ENCODE measurements at regions of chr7 and their contacts with region 1.

Region 1: GRCh38 chr7:96709381-96710228 is at the start of gene SEM1:
- DNase-seq: peak; percentile 19 to 77 (median 41)
- ATAC-seq: peak; percentile 88 to 95 (median 91)
- H3K4me3 ChIP-seq: peak within 1 kb of the TSS; percentile 88 to 94
- H3K4me3 Mint-ChIP-seq: peak within 1 kb of the TSS; percentile 98 to 99 (median 98)
- H3K27ac ChIP-seq: peak within 1 kb of the TSS; percentile 85
- H3K27ac Mint-ChIP-seq: peak within 1 kb of the TSS; percentile 95 to 97
- H3K4me1 ChIP-seq: peaks cover 10% of the 10 kb centered on the region in 2 experiments
- H3K4me1 Mint-ChIP-seq: peaks cover 36 to 46% (median 44%) of the 10 kb centered on the region in 3 donors
- H3K27me3 ChIP-seq: no peaks in the 10 kb centered on the region
- H3K27me3 Mint-ChIP-seq: peaks cover 0 to 3% of the 10 kb centered on the region in 2 donors
- total RNA-seq, gene SEM1: 17.8 to 34.8 (median 30.2) TPM

Region 2: DNA sequence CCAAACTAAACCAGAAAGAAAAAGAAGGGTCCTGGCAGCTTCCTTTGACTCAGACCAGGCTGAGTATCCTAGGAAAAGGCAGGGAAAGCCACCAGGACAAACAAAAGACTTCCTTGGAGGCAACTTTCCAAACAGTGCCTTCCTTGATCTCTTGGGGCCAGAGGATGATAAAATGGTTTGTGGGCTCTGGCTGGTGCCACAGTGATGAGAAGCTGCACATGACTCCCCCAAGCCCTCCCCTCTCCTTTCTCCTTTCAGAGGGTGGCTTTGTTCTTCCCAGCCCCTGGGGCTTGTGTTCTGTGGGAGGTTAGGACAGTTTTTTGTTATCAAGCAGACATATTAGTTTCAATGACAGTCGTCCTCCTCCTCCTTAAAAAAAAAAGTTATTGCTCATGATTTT is 183.1 kb before region 1 on chr7:
- CTCF ChIA-PET with region 1: interaction called in 1 of 2 experiments, 13 read pairs
- POLR2A ChIA-PET with region 1: no interaction called
- DNase-seq: no peak
- ATAC-seq: no peak
- H3K4me3 ChIP-seq: no peak overlapping the region
- H3K4me3 Mint-ChIP-seq: no peak overlapping the region
- H3K27ac ChIP-seq: no peak overlapping the region
- H3K27ac Mint-ChIP-seq: no peak overlapping the region
- H3K4me1 ChIP-seq: no peaks in the 10 kb centered on the region
- H3K4me1 Mint-ChIP-seq: peaks cover 0 to 5% (median 0%) of the 10 kb centered on the region in 3 donors
- H3K27me3 ChIP-seq: peaks cover 0 to 2% of the 10 kb centered on the region in 2 experiments
- H3K27me3 Mint-ChIP-seq: peaks cover 18 to 26% of the 10 kb centered on the region in 2 donors

Region 3: DNA sequence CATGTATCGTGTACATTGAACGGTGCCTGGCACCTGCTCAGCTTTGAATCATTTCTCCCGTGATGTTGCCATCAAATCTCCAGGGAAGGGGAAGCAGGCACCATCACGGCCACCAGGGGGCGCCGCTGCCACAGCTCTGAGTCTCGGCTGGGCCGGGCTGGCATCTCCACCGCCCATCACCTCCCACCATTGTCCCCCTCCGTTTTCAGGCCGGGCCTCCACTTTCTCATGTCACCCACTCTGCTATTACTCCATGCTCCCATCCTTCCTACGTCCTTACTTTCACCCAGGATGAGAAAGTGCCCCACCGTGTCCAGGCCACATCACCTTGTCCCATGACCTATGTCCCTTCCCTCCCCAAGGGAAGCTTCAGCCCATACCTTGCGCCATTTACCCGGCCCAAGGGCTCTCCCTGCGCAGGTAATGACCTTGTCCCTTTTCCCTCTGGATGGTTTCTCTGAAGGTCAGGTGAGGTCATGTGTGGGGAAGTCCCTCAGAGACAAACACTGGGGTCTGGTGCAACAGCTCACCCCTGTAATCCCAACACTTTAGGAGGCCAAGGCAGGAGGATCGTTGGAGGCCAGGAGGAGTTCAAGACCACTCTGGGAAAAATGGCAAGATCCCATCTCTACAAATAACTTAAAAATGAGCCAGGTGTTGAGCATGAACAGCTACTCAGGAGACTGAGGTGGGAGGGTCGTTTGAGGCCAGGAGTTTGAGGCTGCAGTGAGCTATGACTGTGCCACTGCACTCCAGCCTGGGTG is 1312.2 kb after region 1 on chr7:
- CTCF ChIA-PET with region 1: no interaction called
- POLR2A ChIA-PET with region 1: no interaction called
- DNase-seq: peak; percentile 30 to 86 (median 70)
- ATAC-seq: peak; percentile 73 to 82 (median 81)
- H3K4me3 ChIP-seq: no peak overlapping the region
- H3K4me3 Mint-ChIP-seq: no peak overlapping the region
- H3K27ac ChIP-seq: no peak overlapping the region
- H3K27ac Mint-ChIP-seq: no peak overlapping the region
- H3K4me1 ChIP-seq: peaks cover 0 to 5% of the 10 kb centered on the region in 2 experiments
- H3K4me1 Mint-ChIP-seq: peaks cover 0 to 4% (median 3%) of the 10 kb centered on the region in 3 donors
- H3K27me3 ChIP-seq: peaks cover 0 to 33% of the 10 kb centered on the region in 2 experiments
- H3K27me3 Mint-ChIP-seq: peaks cover 3 to 16% of the 10 kb centered on the region in 2 donors

Measured in T-cell (primary cell).